ENCODE measurements at regions of chr3 and their contacts with region 1.

Region 1: DNA sequence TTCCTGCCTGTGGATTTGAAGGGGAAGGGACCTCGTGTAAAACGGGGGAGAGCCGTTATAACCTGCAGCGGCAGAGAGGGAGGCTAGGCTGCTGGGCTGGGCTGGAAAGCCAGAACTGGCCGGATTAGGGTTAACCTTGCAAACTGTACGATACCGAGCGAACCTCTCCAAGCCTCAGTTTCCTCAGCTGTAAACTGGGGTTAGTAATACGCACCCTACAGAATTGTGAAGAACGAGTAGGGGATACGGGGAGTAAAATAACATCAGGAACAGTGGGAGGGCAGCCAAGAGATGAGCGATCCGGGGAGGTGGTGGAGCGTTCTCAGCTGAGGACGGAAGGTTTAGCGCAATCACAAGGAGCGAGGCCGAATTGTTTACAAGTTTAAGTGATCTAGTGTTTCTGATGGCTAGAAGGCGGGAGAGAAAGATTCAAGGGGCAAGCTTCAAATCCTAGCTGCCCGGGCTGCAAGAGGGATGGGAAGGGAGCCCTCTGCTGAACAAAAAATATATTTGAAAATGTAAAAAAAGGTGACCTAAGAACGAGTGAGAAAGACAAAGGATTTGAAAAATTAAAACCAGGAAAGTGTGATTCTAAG is 768 bp upstream of the SEMA5B start:
- DNase-seq: no peak
- H3K4me3 ChIP-seq: peak overlapping the region; percentile 76 to 90 (median 82)
- H3K27ac ChIP-seq: no peak overlapping the region
- H3K4me1 ChIP-seq: peaks cover 0 to 18% (median 10%) of the 10 kb centered on the region in 4 experiments; a peak in 6 of 7 replicates
- H3K27me3 ChIP-seq: peaks cover 0 to 18% (median 10%) of the 10 kb centered on the region in 4 experiments; a peak in 5 of 7 replicates
- CTCF ChIP-seq: peak in 2 of 3 experiments; percentile 36 to 70; a peak in 3 of 4 replicates
- EP300 ChIP-seq: no peak
- POLR2A ChIP-seq: no peak
- RAD21 ChIP-seq: peak; percentile 76 to 81

Region 2: GRCh38 chr3:122864498-122864897 is 163.8 kb before region 1 on chr3:
- CTCF ChIA-PET with region 1: no interaction called
- POLR2A ChIA-PET with region 1: no interaction called
- DNase-seq: no peak
- H3K4me3 ChIP-seq: no peak overlapping the region
- H3K27ac ChIP-seq: no peak overlapping the region
- H3K4me1 ChIP-seq: no peaks in the 10 kb centered on the region
- H3K27me3 ChIP-seq: no peaks in the 10 kb centered on the region
- CTCF ChIP-seq: no peak
- EP300 ChIP-seq: no peak
- POLR2A ChIP-seq: no peak
- RAD21 ChIP-seq: no peak

Region 3: GRCh38 chr3:122952512-122952911 is 75.8 kb before region 1 on chr3:
- CTCF ChIA-PET with region 1: interaction called, 52 read pairs
- POLR2A ChIA-PET with region 1: interaction called, 3 read pairs
- DNase-seq: no peak
- H3K4me3 ChIP-seq: no peak overlapping the region
- H3K27ac ChIP-seq: no peak overlapping the region
- H3K4me1 ChIP-seq: peaks cover 0 to 20% (median 7%) of the 10 kb centered on the region in 4 experiments; a peak in 5 of 7 replicates
- H3K27me3 ChIP-seq: no peaks in the 10 kb centered on the region
- CTCF ChIP-seq: peak; percentile 45 to 50 (median 47)
- EP300 ChIP-seq: no peak
- POLR2A ChIP-seq: no peak
- RAD21 ChIP-seq: peak; percentile 49 to 62

Region 4: GRCh38 chr3:122975163-122975923 is 53.0 kb before region 1 on chr3:
- CTCF ChIA-PET with region 1: interaction called, 14 read pairs
- POLR2A ChIA-PET with region 1: interaction called, 3 read pairs
- DNase-seq: no peak
- H3K4me3 ChIP-seq: peak overlapping the region in 1 of 4 experiments; percentile 12; a peak in 1 of 8 replicates
- H3K27ac ChIP-seq: no peak overlapping the region
- H3K4me1 ChIP-seq: peaks cover 7 to 46% (median 31%) of the 10 kb centered on the region in 4 experiments
- H3K27me3 ChIP-seq: no peaks in the 10 kb centered on the region
- CTCF ChIP-seq: no peak
- EP300 ChIP-seq: no peak
- POLR2A ChIP-seq: no peak
- RAD21 ChIP-seq: no peak

Region 5: GRCh38 chr3:123015557-123015956 is 12.8 kb before region 1 on chr3:
- CTCF ChIA-PET with region 1: interaction called, 29 read pairs
- POLR2A ChIA-PET with region 1: interaction called, 5 read pairs
- DNase-seq: no peak
- H3K4me3 ChIP-seq: no peak overlapping the region
- H3K27ac ChIP-seq: no peak overlapping the region
- H3K4me1 ChIP-seq: peaks cover 0 to 4% (median under 1%) of the 10 kb centered on the region in 4 experiments; a peak in 5 of 7 replicates
- H3K27me3 ChIP-seq: no peaks in the 10 kb centered on the region
- CTCF ChIP-seq: peak; percentile 14 to 43 (median 32)
- EP300 ChIP-seq: no peak
- POLR2A ChIP-seq: no peak
- RAD21 ChIP-seq: peak; percentile 45 to 61

Region 6: GRCh38 chr3:123071146-123071545 is 42.8 kb after region 1 on chr3:
- CTCF ChIA-PET with region 1: interaction called, 10 read pairs
- POLR2A ChIA-PET with region 1: interaction called, 4 read pairs
- DNase-seq: no peak
- H3K4me3 ChIP-seq: no peak overlapping the region
- H3K27ac ChIP-seq: no peak overlapping the region
- H3K4me1 ChIP-seq: peaks cover 7 to 17% (median 13%) of the 10 kb centered on the region in 4 experiments
- H3K27me3 ChIP-seq: peaks cover 0 to 6% (median 5%) of the 10 kb centered on the region in 4 experiments; a peak in 5 of 7 replicates
- CTCF ChIP-seq: peak; percentile 38 to 60 (median 48)
- EP300 ChIP-seq: no peak
- POLR2A ChIP-seq: no peak
- RAD21 ChIP-seq: peak; percentile 27 to 52; a peak in 3 of 4 replicates

Region 7: DNA sequence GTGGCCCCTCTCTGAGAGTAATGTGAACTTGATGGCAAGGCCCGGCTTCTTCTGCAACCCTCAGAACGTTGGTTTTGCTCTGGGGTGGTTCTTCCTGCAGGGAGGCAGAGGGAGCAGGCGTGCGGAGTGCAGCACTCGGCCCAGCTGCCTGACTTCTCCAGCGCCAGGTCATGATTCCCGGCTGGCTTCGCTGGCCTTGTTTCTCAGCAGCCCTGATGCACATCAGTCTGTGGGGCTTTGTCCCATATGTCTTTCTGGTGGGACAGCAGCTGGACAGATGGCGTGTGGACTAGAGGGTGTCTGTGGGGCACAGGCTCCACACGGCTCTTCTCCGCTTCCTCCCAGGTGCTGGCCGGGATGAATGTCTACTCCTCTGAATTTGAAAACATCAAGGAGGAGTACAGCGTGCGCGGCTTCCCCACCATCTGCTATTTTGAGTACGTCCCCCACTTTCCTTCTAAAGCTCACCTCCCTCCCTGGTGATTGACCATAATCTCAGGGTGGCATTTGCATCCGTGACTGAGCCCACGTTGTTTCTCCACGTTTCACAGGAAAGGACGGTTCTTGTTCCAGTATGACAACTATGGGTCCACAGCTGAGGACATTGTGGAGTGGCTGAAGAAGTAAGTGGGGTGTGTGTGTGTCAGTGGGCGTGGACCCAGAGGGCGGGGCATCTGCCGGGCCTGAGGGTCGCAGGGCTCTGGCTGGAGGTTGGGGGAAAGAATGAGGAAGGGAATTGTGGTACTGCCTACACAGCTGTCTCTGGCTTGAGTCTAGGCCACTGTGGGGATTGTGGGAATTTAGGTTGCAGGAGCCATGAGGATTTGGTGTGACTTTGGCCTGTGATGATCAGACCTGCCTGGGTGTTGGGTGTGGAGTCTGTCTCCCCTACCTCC is 95.6 kb after region 1 on chr3:
- CTCF ChIA-PET with region 1: no interaction called
- POLR2A ChIA-PET with region 1: no interaction called
- DNase-seq: no peak
- H3K4me3 ChIP-seq: no peak overlapping the region
- H3K27ac ChIP-seq: no peak overlapping the region
- H3K4me1 ChIP-seq: peaks cover 0 to 11% (median 2%) of the 10 kb centered on the region in 4 experiments; a peak in 6 of 7 replicates
- H3K27me3 ChIP-seq: no peaks in the 10 kb centered on the region
- CTCF ChIP-seq: no peak
- EP300 ChIP-seq: no peak
- POLR2A ChIP-seq: no peak
- RAD21 ChIP-seq: no peak

Region 8: DNA sequence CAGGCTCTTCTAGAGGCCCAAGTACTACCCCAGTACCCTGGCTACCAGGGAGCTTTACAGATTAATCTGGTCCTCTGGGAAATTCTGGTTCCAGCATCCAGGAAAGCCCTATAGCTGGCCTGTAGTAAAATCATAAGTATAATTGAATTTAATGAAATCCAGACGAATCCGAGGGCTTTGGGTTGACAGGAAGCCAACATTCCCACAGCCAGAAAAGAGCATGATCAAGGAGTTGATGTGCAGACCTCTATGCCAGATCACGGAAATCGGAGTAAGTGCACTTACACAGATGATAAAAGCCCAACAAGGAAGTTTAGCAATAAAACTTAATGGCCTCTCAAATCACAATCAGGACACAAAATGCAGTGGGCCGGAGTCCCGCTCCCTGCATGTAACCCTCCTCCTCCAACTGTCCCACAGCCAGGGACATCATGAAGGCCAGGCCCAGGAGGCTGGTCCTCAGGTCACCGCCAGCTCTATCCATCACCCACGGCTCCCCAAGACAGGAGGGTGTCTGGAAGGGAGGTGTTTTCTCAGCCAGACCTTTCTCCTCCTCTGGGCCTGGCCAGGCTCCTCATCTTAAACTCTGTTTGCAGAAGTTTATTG is 110.6 kb after region 1 on chr3:
- CTCF ChIA-PET with region 1: no interaction called
- POLR2A ChIA-PET with region 1: no interaction called
- DNase-seq: no peak
- H3K4me3 ChIP-seq: no peak overlapping the region
- H3K27ac ChIP-seq: no peak overlapping the region
- H3K4me1 ChIP-seq: peaks cover 4 to 6% (median 5%) of the 10 kb centered on the region in 4 experiments; a peak in 5 of 7 replicates
- H3K27me3 ChIP-seq: no peaks in the 10 kb centered on the region
- CTCF ChIP-seq: no peak
- EP300 ChIP-seq: no peak
- POLR2A ChIP-seq: no peak
- RAD21 ChIP-seq: no peak

Measured in H1 (cell line).